Activated T-helper 2 cell treated with anti-CD3 and anti-CD28 coated beads, Interferon-gamma antibody, Interleukin-2, Interleukin-4, amounts not matched to agents 10 μg/mL and 5 μg/mL and 100 μg/mL, durations not matched to agents 14 hours and 24 hours and 36 hours (primary cell): ENCODE measurements at regions of chr1 and their contacts with region 1.

Region 1: DNA sequence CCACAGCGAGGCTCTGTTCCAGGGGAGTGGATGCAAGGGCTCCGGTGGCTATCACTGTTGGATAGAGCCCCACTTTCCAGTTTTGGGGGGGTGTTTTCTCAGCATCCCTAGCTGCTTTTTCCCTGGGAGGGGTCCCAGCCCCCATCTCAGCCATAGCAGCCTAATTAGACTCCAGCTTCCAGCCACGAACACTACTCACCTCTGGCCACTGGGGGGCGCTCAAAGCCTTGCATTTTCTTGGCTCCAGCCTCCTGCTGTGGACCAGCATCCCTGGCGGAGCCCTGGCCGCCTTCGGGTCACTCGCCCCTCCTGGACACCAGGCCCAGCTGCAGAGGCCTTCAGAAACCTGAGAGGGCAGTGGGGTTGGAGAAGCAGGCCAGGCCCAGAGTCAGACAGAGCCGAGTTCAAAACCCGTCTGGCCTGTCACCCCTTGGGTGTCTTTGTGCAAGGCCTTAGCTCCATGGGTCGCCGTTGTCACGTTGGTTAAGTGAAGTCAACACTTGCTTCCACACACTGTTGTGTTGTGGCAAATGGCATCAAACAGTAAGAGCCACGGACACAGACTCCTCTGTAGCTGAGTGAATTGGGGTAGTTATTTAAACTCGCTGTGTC is 93.5 kb upstream of the ACTL8 start:
- DNase-seq: peak; percentile 28
- H3K4me3 Mint-ChIP-seq: no peak overlapping the region
- H3K27ac Mint-ChIP-seq: no peak overlapping the region
- H3K4me1 Mint-ChIP-seq: no peaks in the 10 kb centered on the region
- H3K27me3 Mint-ChIP-seq: no peaks in the 10 kb centered on the region

Region 2: GRCh38 chr1:17561561-17561985 is 100.1 kb before region 1 on chr1:
- intact Hi-C with region 1: no loop called
- DNase-seq: no peak
- H3K4me3 Mint-ChIP-seq: no peak overlapping the region
- H3K27ac Mint-ChIP-seq: no peak overlapping the region
- H3K4me1 Mint-ChIP-seq: no peaks in the 10 kb centered on the region
- H3K27me3 Mint-ChIP-seq: no peaks in the 10 kb centered on the region

Region 3: GRCh38 chr1:17719874-17720273 is 58.2 kb after region 1 on chr1:
- intact Hi-C with region 1: no loop called
- DNase-seq: no peak
- H3K4me3 Mint-ChIP-seq: no peak overlapping the region
- H3K27ac Mint-ChIP-seq: no peak overlapping the region
- H3K4me1 Mint-ChIP-seq: no peaks in the 10 kb centered on the region
- H3K27me3 Mint-ChIP-seq: no peaks in the 10 kb centered on the region

Region 4: DNA sequence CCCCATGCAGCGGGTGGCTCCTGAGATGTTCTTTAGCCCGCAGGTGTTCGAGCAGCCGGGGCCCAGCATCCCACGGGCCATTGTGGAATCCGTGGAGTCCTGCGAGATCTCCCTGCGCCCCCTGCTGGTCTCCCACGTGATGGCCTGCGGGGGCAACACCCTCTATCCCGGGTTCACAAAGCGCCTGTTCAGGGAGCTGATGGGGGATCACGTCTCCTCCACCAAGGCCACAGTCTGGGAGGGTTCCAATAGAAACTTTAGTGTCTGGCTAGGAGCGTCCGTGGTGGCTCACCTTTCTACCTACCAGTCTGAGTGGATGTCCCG is 164.5 kb after region 1 on chr1:
- intact Hi-C with region 1: loop called (anchors 5 kb)
- DNase-seq: no peak
- H3K4me3 Mint-ChIP-seq: no peak overlapping the region
- H3K27ac Mint-ChIP-seq: no peak overlapping the region
- H3K4me1 Mint-ChIP-seq: no peaks in the 10 kb centered on the region
- H3K27me3 Mint-ChIP-seq: no peaks in the 10 kb centered on the region

Region 5: DNA sequence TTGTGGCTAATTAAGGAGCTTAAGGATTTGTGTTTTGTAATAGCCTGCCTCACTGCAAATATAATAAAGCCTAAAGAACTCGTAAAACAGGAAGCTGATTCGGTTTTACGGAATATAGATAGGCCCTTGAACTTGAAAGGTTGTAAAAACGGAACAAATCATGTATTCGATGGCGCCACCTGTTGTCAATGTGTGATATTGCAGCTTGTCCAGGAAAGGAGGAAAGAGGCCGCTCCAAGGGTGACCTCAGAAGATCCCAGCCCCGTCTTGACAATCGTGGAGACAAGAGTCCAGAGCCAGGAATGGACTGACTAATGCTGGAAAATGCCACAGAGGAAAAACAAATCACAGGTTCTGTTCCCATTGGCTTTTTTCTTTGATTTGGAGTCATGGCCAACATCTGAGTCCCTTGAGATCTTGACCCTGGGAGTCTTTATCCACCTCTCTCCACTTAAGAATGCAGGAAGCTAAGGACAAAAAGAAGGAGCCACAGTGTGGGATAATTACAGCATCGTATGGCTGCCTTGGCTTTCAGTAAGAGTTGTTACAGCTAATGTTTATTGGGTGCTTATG is 438.9 kb after region 1 on chr1:
- intact Hi-C with region 1: loop called (anchors 5 kb)
- DNase-seq: peak; percentile 18
- H3K4me3 Mint-ChIP-seq: no peak overlapping the region
- H3K27ac Mint-ChIP-seq: no peak overlapping the region
- H3K4me1 Mint-ChIP-seq: no peaks in the 10 kb centered on the region
- H3K27me3 Mint-ChIP-seq: peaks cover 3% of the 10 kb centered on the region